GM10248 (cell line): ENCODE measurements at regions of chr22 and their contacts with region 1.

Region 1: DNA sequence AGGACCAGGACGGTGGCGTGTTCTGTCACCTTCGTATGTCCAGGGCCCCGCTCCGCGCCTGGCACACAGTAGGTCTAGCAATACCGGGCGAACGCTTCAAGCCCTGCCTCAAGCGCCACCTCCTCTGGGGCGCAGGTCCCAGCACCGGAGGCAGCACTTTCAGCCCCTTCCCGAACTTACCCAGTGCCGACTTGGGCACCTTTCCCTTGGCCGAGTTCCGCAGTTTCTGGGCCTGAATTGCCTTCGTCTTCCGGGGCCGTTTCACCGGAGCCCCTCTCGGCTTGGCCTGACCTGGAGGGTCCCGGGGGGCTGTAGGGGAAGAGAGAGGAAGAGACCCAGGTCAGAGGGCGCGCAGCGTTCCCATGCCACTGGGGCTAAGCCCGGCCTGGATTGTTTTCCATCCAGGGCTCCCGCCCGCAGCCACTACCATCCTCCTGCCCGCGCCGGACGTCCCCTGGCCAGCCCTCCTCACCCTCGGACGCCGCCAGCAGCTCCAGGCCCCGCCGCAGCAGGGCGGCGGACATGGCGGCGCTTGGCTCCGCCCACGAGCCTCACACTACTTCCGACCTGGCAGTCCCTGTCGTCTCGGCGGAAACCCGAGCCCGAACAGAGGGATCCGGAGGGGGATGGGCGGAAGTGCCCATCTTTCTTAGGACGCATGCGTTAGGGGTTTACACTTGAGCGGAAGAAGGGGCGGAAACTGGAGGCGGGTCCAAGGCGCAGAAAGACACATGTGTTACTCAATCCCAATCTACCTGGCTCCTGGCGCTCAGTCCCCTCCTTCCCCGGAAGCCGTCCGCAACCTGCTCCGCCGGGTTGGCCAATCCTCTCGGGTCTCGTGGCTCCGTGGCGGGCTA is at the start of gene RPS19BP1:
- DNase-seq: peak; percentile 96
- CTCF ChIP-seq: no peak

Region 2: DNA sequence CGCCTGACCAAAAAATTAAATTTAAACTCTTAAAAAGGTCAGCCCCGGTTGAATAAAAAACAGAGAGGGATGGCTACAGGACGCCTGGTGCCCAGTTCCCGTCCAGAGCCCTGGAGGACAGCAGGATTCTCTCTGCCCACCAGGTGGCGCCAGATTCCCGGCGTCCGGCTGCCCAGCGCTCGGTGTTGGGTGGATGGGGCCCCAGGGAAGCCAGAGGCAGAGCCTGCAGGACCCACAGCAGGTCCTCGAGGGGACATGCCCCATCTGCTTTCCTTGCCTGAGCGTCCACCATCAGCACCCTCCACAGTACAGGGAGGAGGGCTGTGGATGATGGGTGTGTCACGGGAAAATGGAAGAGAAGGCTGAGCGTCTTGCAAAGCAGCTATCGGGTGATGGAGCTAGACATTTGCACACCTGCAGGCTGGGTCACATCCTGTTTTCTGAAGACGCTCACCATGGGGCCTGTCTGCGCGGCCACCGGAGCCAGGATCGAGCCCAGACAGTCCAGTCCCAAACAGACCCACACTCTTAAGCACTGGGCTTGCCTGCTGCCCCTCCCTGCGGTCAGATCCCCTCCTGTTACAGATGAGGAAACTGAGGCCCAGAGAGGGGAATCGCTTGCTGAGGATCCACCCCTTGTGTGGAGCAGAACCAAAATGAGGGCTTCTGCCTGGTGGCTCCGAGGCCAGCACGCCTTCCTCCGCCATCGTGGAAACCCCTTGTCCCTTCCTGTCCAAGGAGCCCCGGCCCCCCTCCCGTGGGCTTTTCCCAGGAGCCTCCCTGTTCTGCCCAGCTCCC is 361.4 kb before region 1 on chr22:
- CTCF ChIA-PET with region 1: interaction called, 14 read pairs
- POLR2A ChIA-PET with region 1: no interaction called
- DNase-seq: peak; percentile 86
- CTCF ChIP-seq: peak; percentile 98

Region 3: DNA sequence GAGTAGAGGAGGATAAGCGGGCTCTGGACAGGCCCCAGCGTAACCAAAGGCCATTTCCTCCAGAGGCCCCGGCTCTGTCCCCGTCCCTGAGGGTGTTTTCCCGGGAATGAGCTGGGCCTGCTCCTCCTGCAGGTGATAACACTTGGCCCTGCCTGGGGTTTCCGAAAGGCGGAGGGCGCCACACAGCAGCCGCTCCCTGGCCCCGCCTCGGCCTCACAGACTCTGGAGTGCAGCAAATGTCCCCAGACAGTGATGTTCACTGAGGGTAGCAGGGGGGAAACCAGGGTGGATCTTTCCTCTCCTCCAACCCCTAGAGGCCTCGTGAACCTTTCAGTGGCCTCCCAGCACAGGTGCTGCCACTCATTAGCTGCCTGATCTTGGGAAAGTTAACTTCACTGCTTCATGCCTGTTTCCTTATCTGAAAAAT is 86.1 kb before region 1 on chr22:
- CTCF ChIA-PET with region 1: interaction called, 12 read pairs
- POLR2A ChIA-PET with region 1: no interaction called
- DNase-seq: peak; percentile 74
- CTCF ChIP-seq: peak; percentile 22

Region 4: GRCh38 chr22:39496131-39496838 is 36.2 kb before region 1 on chr22:
- CTCF ChIA-PET with region 1: interaction called, 115 read pairs
- POLR2A ChIA-PET with region 1: no interaction called
- DNase-seq: peak; percentile 59
- CTCF ChIP-seq: peak; percentile 71

Region 5: GRCh38 chr22:39514373-39514973 is 18.0 kb before region 1 on chr22:
- CTCF ChIA-PET with region 1: interaction called, 49 read pairs
- POLR2A ChIA-PET with region 1: interaction called, 25 read pairs
- DNase-seq: no peak
- CTCF ChIP-seq: peak; percentile 77

Region 6: GRCh38 chr22:40024201-40025061 is 492.0 kb after region 1 on chr22:
- CTCF ChIA-PET with region 1: interaction called, 419 read pairs
- POLR2A ChIA-PET with region 1: no interaction called
- DNase-seq: peak; percentile 87
- CTCF ChIP-seq: peak; percentile 87

Region 7: DNA sequence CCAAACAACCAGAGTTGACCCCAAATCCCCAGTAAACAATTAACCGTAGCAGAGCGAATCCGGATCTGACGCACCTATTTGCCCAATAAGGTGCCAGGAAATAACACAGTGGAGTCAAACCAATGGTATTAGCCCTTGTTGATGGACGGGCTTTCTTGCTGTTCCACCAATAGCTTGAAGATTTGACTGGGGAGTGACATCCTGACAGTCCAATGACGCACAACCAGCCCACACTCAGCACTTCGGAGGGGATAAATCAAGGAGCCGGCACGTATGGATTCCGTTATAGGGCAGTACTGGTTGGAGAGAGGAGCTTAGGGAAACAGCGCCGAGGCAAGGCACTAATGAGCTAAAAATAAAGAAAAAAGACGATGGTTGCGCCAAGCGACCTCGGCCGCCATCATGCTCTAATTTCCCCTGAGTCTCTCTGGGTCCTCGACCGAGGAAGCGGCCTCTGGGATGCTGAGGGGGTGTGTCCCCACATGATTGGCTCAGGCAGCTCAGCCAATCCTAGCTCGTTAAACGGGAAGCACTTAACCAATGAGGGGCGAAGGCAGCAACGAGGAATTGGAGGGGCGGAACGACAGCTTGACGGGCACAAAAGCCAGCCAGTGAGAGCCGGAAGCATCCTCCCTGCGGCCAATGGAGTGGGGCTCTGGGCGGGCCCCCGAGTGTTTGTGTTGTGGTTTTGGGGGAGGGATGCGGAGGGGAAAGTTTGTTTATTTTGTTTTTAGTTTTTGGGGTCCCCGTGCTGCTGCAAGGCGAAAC is 511.8 kb after region 1 on chr22:
- CTCF ChIA-PET with region 1: interaction called, 419 read pairs
- POLR2A ChIA-PET with region 1: interaction called, 3 read pairs
- DNase-seq: peak; percentile 98
- CTCF ChIP-seq: no peak